PC-3 (cell line): ENCODE measurements at regions of chr15 and their contacts with region 1.

Region 1: DNA sequence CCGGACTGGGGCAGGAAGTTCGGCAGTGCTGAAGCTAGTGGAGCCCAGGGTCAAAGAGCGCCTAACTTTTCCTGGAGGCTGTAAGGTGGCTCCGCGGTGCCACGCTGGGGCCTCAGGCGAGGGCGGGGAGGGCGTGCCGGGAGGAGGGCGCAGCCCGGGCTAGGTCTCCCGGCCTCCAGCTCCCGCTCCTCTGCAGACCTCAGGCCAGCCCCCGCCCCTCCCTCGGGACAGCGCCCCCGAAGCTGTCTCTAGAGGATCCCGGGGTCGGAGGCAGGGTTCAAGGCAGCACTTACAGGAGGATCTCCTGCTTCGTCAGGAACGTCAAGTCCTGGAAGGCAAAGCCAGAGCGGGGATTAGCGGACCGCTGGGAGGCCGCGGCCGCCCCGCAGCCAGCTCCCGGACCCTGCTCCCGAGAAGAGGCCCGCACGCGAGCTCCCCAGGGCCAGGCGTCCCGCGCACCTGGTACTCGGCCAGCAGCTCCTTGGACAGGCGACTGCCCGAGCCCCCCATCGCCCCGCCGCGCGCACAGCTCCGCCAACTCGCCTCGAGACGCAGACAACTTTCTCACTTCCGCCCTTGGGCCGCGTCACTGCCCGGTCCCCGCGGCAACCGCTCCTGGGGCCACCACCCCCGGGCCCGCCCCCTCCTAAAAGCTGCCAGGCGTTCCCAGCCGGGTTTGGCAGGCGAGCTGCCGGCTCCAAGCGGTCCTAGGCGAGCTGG is at the start of gene CIB1:
- DNase-seq: peak; percentile 97
- ATAC-seq: peak; percentile 79
- H3K4me3 ChIP-seq: peak within 1 kb of the TSS; percentile 92
- H3K27ac ChIP-seq: peak within 1 kb of the TSS; percentile 89
- H3K4me1 ChIP-seq: peaks cover 27% of the 10 kb centered on the region
- H3K27me3 ChIP-seq: no peaks in the 10 kb centered on the region
- CTCF ChIP-seq: peak; percentile 45; the same call in 1 of the 2 replicates
- total RNA-seq, gene CIB1: 83.7 and 85.8 TPM in 2 replicates

Region 2: GRCh38 chr15:90143166-90143655 is 90.3 kb before region 1 on chr15:
- CTCF ChIA-PET with region 1: interaction called, 9 read pairs
- POLR2A ChIA-PET with region 1: no interaction called
- intact Hi-C with region 1: loop called (anchors 5 kb)
- DNase-seq: peak; percentile 79
- ATAC-seq: peak; percentile 95
- H3K4me3 ChIP-seq: no peak overlapping the region
- H3K27ac ChIP-seq: peak overlapping the region; percentile 4; the same call in 1 of the 2 replicates
- H3K4me1 ChIP-seq: peaks cover 13% of the 10 kb centered on the region
- H3K27me3 ChIP-seq: no peaks in the 10 kb centered on the region
- CTCF ChIP-seq: peak; percentile 94

Region 3: DNA sequence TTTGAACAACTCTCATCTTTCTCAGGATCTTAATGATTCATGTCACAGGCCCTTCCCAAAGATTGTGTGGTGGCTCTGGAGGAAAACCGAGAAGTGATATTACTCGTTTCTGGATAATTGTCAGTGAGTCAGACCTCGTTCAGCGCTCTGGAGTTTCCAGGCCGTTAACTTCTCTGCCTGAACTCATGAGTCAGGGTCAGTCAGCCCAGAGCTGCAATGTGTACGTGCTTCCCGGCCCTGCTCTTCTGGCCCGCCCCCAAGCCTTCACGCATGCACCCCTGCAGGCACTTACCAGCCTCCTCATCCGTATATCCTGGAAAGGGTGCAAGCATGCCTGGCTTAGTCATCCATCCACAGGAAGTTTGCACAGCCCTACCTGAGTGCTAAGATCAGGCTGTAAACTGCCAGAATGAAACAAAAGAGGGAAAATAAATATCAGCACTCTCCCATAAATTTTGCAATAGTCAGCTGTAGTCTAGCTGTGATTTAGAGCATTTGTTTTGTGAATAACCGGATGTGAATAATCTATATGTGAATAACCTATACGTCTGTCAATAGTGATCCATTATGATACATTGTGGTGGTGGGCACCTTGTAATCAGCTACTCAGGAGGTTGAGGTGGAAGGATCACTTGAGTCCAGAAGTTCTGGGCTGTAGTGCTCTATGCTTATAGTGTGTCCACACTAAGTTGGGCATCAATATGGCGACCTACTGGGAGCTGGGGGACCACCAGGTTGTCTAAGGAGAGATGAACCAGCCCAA is 67.7 kb before region 1 on chr15:
- CTCF ChIA-PET with region 1: no interaction called
- POLR2A ChIA-PET with region 1: interaction called, 11 read pairs
- intact Hi-C with region 1: no loop called
- DNase-seq: peak; percentile 99
- ATAC-seq: peak; percentile 91
- H3K4me3 ChIP-seq: no peak overlapping the region
- H3K27ac ChIP-seq: peak overlapping the region; percentile 100
- H3K4me1 ChIP-seq: peaks cover 52% of the 10 kb centered on the region
- H3K27me3 ChIP-seq: no peaks in the 10 kb centered on the region
- CTCF ChIP-seq: no peak

Region 4: GRCh38 chr15:90265271-90266060 is 31.9 kb after region 1 on chr15 and contains the start of gene NGRN:
- CTCF ChIA-PET with region 1: interaction called, 12 read pairs
- POLR2A ChIA-PET with region 1: no interaction called
- intact Hi-C with region 1: loop called (anchors 5 kb)
- DNase-seq: peak; percentile 85
- ATAC-seq: peak; percentile 80
- H3K4me3 ChIP-seq: peak within 1 kb of the TSS; percentile 77
- H3K27ac ChIP-seq: peak within 1 kb of the TSS; percentile 76
- H3K4me1 ChIP-seq: peaks cover 55% of the 10 kb centered on the region
- H3K27me3 ChIP-seq: no peaks in the 10 kb centered on the region
- CTCF ChIP-seq: no peak
- total RNA-seq, gene NGRN: 99.3 and 114 TPM in 2 replicates

Region 5: GRCh38 chr15:90286678-90287077 is 53.1 kb after region 1 on chr15:
- CTCF ChIA-PET with region 1: no interaction called
- POLR2A ChIA-PET with region 1: interaction called, 6 read pairs
- intact Hi-C with region 1: loop called (anchors 2 kb)
- DNase-seq: peak; percentile 58
- ATAC-seq: peak; percentile 69
- H3K4me3 ChIP-seq: no peak overlapping the region
- H3K27ac ChIP-seq: no peak overlapping the region
- H3K4me1 ChIP-seq: no peaks in the 10 kb centered on the region
- H3K27me3 ChIP-seq: no peaks in the 10 kb centered on the region
- CTCF ChIP-seq: peak; percentile 80

Region 6: DNA sequence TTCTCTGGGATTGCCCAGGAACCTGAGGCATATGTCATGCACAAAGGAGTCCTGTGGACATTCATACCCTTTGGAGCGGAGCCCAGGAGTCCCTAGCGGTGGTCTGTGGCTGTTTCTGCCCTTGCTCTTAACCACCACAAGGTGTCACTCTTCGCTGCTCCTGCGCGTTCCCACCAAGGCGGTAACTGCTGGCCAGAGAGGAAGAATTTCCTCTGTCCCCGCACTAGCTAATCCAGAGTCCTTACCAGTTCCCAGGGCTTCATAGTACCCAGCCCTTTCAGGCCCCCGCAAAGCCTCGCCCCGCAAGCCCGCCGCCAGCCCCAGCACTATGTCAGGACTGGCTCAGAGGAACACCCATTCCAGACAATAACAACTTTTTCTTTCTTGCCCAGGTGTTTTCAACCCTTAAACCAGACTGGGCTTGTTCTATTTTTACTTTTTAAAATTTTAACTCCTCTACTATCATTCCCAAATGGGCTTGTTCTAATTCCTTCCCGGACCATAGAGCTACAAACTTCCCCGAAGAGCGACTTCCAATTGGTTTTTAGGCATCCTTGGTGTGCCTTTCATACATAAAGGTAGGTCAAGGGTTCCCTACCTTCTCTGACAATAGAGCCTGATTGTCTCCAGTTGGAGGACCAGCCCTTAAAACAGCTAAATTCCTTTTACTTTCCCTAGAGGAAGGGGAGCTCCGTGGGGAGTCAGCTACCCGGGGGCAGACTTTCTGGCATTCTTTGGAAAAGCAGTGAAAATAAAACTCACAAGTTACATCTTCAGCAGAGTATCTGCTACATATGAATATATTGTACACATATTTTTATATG is 86.7 kb after region 1 on chr15:
- CTCF ChIA-PET with region 1: no interaction called
- POLR2A ChIA-PET with region 1: no interaction called
- intact Hi-C with region 1: no loop called
- DNase-seq: peak; percentile 96
- ATAC-seq: peak; percentile 93
- H3K4me3 ChIP-seq: peak overlapping the region; percentile 28; the same call in 1 of the 2 replicates
- H3K27ac ChIP-seq: no peak overlapping the region
- H3K4me1 ChIP-seq: peaks cover 17% of the 10 kb centered on the region
- H3K27me3 ChIP-seq: no peaks in the 10 kb centered on the region
- CTCF ChIP-seq: peak; percentile 97

Region 7: DNA sequence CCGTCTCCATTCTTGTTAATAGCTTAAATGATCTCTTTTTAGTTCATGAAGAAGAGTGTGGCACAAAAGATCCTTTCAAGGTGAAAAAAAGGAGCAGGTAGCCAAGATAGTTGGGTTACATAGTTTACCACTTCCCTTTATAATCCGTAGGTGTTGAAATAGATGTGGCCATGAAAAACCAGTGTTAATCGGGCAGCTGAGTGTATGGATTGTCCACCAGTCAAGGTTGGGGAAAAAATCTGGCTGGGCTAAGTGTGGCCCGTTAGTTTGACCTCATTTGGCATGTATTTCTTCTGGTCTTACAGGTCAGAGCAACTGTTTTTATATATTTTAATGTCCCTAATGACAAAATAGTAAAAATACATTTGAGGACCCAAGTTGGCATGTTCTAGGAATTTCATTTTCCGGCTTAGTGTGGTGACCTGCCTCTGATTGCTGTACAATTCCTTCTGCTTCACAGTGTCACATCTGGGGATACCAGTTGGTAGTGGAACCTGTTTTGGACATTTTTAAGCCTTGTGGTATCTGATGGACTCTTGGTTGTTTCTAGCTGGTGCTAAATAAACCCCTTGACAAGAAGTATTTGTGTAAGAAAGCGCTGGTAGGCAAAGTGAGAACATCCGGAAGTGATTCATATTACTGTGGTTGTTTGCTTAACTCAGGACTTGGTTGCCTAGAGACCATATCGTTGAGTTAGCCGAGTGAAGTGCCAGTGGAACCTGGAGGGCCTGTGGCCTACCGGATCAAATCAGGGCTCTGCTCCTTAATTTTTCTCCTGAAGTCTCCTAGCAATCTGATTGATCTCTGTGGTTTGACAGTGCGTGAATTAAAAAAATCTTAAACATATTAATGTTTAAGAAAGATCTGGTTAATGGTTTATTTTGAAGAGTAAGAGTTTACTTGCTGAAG is 167.1 kb after region 1 on chr15:
- CTCF ChIA-PET with region 1: no interaction called
- POLR2A ChIA-PET with region 1: interaction called, 10 read pairs
- intact Hi-C with region 1: no loop called
- DNase-seq: peak; percentile 94
- ATAC-seq: peak; percentile 77
- H3K4me3 ChIP-seq: peak overlapping the region; percentile 33
- H3K27ac ChIP-seq: peak overlapping the region; percentile 78
- H3K4me1 ChIP-seq: peaks cover 45% of the 10 kb centered on the region
- H3K27me3 ChIP-seq: no peaks in the 10 kb centered on the region
- CTCF ChIP-seq: no peak